Activated naive CD4-positive, alpha-beta T cell treated with anti-CD3 and anti-CD28 coated beads for 36 hours (primary cell): ENCODE measurements at regions of chr6 and their contacts with region 1.

Region 1: DNA sequence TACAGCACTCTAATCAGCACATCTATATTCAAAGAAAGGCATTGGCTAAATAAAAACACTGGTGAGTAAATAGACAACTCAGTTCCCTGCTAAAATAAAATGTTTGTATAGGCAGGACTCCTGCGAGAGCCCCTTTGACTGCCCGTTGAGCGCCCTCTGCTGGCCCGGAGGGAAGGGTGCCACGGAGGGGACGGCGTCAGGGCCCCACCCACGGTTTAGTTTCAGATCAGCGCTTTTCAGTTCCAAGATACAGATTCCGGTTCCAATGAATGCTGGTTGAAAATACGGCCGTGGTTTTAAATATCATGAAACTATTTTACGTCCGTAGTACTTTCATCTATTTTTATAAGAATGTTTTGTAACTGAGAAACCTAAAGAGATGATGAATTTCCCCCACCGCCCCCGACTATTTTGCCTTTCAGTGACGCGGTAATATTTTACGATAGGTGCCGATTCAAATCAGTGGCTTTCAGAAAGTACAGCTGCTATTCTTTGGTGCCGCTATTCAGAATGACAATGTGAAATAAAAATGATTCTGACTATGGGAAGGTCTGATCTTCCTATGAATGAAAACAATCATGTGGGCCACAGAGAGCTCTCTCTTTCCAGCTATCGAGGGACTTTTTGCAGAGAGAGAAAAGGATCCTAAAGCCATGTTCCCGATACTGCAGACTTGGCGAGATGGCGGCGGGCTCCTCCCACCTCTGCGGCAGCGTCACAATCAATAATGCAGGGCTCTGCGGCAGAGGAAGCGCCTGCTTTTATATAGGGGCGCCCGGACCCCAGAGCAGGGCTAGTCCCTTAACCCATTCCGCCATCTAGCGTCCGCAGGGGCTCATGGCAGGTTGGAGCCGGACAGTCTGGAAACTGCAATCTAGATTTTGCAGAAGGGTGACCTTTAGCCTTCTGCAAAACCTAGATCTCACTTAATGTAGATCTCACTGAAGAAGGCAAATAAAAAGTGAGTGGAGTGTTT is 10.6 kb upstream of the CCN6 start:
- DNase-seq: peak; percentile 94
- H3K4me3 Mint-ChIP-seq: peak overlapping the region; percentile 91
- H3K27ac Mint-ChIP-seq: peak overlapping the region; percentile 98
- H3K4me1 Mint-ChIP-seq: peaks cover 39% of the 10 kb centered on the region
- H3K27me3 Mint-ChIP-seq: no peaks in the 10 kb centered on the region

Region 2: GRCh38 chr6:111011360-111012142 is 1031.8 kb before region 1 on chr6:
- CTCF ChIA-PET with region 1: interaction called, 4 read pairs
- intact Hi-C with region 1: loop called (anchors 10 kb)
- DNase-seq: no peak
- H3K4me3 Mint-ChIP-seq: no peak overlapping the region
- H3K27ac Mint-ChIP-seq: no peak overlapping the region
- H3K4me1 Mint-ChIP-seq: peaks cover 6% of the 10 kb centered on the region
- H3K27me3 Mint-ChIP-seq: no peaks in the 10 kb centered on the region

Region 3: GRCh38 chr6:111259089-111259831 is 784.1 kb before region 1 on chr6:
- CTCF ChIA-PET with region 1: interaction called, 24 read pairs
- intact Hi-C with region 1: loop called (anchors 1 kb)
- DNase-seq: peak; percentile 99
- H3K4me3 Mint-ChIP-seq: peak overlapping the region; percentile 77
- H3K27ac Mint-ChIP-seq: peak overlapping the region; percentile 79
- H3K4me1 Mint-ChIP-seq: peaks cover 34% of the 10 kb centered on the region
- H3K27me3 Mint-ChIP-seq: no peaks in the 10 kb centered on the region

Region 4: DNA sequence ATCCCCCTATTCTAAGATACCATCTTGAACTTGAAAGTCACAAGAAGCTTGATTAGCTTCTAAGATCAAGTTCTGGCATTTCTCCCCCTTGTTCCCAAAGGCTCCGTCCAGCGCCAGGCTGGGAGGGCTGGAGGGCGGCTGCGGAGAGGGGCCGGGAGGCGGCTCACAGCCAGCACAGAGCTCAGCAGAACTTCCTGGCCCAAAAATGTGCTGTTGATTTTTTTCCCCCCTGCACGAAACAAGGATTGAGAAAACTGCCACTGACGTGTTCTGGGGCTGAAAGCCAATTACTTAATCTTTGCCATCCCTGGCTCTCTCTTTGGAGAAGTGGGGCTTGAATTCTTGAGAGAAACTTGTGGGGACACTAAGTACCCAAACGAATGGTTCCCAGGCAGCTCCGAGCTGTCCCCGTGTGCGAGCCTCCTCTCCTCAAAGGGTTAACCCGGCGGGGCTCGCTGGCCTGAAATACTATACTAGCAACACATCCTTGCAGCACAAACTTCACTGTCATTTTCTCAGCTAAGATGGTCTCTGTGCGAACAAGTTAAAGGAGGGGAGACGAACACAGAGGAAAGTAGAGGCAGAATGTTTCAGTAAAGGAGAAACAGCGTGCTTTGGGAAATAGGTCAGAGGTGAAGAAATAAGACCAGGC is 438.1 kb before region 1 on chr6:
- CTCF ChIA-PET with region 1: interaction called, 3 read pairs
- intact Hi-C with region 1: loop called (anchors 1 kb)
- DNase-seq: peak; percentile 38
- H3K4me3 Mint-ChIP-seq: peak overlapping the region; percentile 82
- H3K27ac Mint-ChIP-seq: peak overlapping the region; percentile 93
- H3K4me1 Mint-ChIP-seq: peaks cover 39% of the 10 kb centered on the region
- H3K27me3 Mint-ChIP-seq: no peaks in the 10 kb centered on the region

Region 5: GRCh38 chr6:111804627-111805235 is 238.6 kb before region 1 on chr6:
- CTCF ChIA-PET with region 1: interaction called, 10 read pairs
- intact Hi-C with region 1: no loop called
- DNase-seq: peak; percentile 74
- H3K4me3 Mint-ChIP-seq: peak overlapping the region; percentile 5
- H3K27ac Mint-ChIP-seq: peak overlapping the region; percentile 92
- H3K4me1 Mint-ChIP-seq: peaks cover 92% of the 10 kb centered on the region
- H3K27me3 Mint-ChIP-seq: no peaks in the 10 kb centered on the region

Region 6: DNA sequence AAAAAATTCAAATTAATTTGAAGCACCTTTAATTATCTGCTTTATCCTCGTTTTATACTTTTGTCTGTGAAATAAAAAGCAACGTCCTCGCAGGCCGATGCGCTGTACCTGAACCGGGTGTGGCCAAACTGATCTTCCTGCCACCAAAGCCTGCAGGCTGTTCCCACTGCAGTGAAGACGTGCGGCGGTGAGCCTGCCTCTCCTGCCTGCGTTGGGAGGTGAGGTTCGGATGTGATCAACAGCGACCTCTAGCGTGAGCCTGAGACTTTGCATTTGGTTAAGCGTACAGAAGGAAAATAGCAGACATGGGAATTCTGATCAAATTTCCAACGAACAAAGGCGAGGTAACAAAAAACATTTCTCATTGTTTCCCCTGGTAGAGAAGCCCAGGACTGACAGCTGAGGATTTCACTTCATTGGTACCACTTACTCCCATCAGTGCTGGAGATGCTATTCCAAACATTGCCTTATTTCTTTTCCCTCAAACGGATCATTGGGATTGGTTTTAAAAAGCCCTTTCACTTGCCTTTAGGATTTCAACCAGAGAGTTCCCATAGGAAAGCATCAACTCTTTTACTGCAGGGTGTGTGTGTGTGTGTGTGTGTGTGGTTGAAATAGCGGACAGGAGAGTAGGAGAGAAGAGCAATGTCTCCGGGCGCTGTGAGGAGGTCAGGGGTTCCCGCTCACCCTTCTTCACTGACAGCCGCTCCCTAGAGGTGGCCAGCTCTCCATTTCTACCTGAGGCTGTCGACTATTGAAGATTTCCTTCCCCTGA is 46.1 kb before region 1 on chr6:
- CTCF ChIA-PET with region 1: interaction called, 29 read pairs
- intact Hi-C with region 1: loop called (anchors 1 kb)
- DNase-seq: peak; percentile 89
- H3K4me3 Mint-ChIP-seq: peak overlapping the region; percentile 53
- H3K27ac Mint-ChIP-seq: peak overlapping the region; percentile 65
- H3K4me1 Mint-ChIP-seq: peaks cover 47% of the 10 kb centered on the region
- H3K27me3 Mint-ChIP-seq: no peaks in the 10 kb centered on the region

Region 7: DNA sequence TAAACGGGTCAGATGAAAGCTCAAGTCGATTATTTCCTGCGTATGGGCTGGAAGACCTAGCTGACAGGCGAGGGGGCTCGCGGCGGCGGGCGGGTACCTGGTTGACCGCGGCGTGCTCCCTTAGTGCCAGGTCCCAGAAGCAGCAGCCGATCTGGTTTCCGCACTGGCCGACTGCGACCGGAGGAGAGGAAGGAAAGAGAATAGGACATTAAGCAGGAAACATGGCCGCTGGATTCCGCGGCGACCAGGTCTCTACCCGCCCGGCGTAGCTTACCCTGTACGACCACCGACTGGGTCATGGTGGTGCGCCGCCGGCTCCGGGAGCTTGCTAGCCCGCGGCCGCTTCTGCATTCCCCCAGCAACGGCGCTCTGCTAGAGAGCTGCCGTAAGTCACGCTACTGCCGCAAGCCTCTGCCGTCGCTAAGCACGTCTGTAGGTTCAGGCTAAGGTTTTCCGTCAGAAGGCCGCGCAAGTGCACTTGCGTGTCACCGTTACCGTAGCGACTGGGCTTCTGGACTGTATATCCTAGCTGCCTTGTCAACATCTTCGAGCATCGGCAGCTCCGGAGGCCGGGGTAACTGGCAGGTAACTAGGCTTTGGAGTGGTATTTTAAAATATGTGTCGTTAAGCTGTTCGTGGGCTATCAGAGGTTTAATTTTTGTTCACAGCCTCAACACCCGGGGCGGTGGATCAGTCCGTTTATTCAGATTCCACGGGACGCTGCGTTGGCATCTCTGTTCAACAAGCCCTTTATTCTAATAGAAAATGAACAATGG is 44.0 kb after region 1 on chr6 and contains the starts of genes FAM229B and TUBE1:
- CTCF ChIA-PET with region 1: interaction called, 5 read pairs
- intact Hi-C with region 1: loop called (anchors 1 kb)
- DNase-seq: peak; percentile 95
- H3K4me3 Mint-ChIP-seq: no peak within 1 kb of the TSS
- H3K27ac Mint-ChIP-seq: no peak within 1 kb of the TSS
- H3K4me1 Mint-ChIP-seq: peaks cover 7% of the 10 kb centered on the region
- H3K27me3 Mint-ChIP-seq: no peaks in the 10 kb centered on the region
- total RNA-seq, gene FAM229B: 9.5 to 10.2 TPM
- total RNA-seq, gene TUBE1: 53.7 to 62.7 TPM

Region 8: DNA sequence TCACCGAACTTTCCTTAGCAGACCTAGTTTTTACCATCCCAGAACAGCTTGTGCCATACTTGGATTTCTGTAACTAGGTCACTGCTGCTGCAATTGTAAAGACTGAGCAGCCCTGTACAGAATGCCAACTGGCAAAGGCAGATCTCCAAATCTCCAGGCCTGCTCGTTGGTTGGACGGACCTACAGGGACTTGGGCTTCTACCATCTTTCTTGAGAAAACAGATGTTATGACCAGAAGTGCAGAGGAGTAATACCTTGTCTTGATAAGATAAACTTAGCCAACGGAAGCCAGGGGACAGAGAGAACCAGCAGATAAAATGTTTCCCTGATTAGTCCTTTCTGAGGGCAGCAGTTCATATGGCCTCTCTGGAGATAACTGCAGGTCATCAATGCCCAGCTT is 607.9 kb after region 1 on chr6:
- CTCF ChIA-PET with region 1: no interaction called
- intact Hi-C with region 1: no loop called
- DNase-seq: no peak
- H3K4me3 Mint-ChIP-seq: no peak overlapping the region
- H3K27ac Mint-ChIP-seq: no peak overlapping the region
- H3K4me1 Mint-ChIP-seq: no peaks in the 10 kb centered on the region
- H3K27me3 Mint-ChIP-seq: no peaks in the 10 kb centered on the region